OCI-LY7 (cell line): ENCODE measurements at regions of chr7 and their contacts with region 1.

Region 1: GRCh38 chr7:18495412-18496340 is at the start of gene HDAC9:
- DNase-seq: peak; percentile 92
- H3K4me3 ChIP-seq: peak within 1 kb of the TSS; percentile 85
- H3K27ac ChIP-seq: peak within 1 kb of the TSS; percentile 79
- H3K4me1 ChIP-seq: peaks cover 29% of the 10 kb centered on the region
- CTCF ChIP-seq: no peak
- total RNA-seq, gene HDAC9: 90.3 and 91.7 TPM in 2 replicates

Region 2: GRCh38 chr7:18352339-18353255 is 143.1 kb before region 1 on chr7:
- CTCF ChIA-PET with region 1: interaction called, 4 read pairs
- POLR2A ChIA-PET with region 1: interaction called, 4 read pairs
- intact Hi-C with region 1: loop called (anchors 5 kb)
- DNase-seq: peak; percentile 66
- H3K4me3 ChIP-seq: no peak overlapping the region
- H3K27ac ChIP-seq: no peak overlapping the region
- H3K4me1 ChIP-seq: peaks cover 9% of the 10 kb centered on the region
- CTCF ChIP-seq: peak; percentile 98

Region 3: GRCh38 chr7:18520450-18521235 is 25.0 kb after region 1 on chr7:
- CTCF ChIA-PET with region 1: interaction called, 4 read pairs
- POLR2A ChIA-PET with region 1: interaction called, 532 read pairs
- intact Hi-C with region 1: loop called (anchors 1 kb)
- DNase-seq: peak; percentile 87
- H3K4me3 ChIP-seq: peak overlapping the region; percentile 65
- H3K27ac ChIP-seq: peak overlapping the region; percentile 99
- H3K4me1 ChIP-seq: peaks cover 99% of the 10 kb centered on the region
- CTCF ChIP-seq: no peak

Region 4: GRCh38 chr7:18538554-18539250 is 43.0 kb after region 1 on chr7:
- CTCF ChIA-PET with region 1: no interaction called
- POLR2A ChIA-PET with region 1: interaction called, 23 read pairs
- intact Hi-C with region 1: loop called (anchors 5 kb)
- DNase-seq: no peak
- H3K4me3 ChIP-seq: no peak overlapping the region
- H3K27ac ChIP-seq: no peak overlapping the region
- H3K4me1 ChIP-seq: peaks cover 62% of the 10 kb centered on the region
- CTCF ChIP-seq: no peak

Region 5: GRCh38 chr7:18666107-18666728 is 170.5 kb after region 1 on chr7:
- CTCF ChIA-PET with region 1: interaction called, 4 read pairs
- POLR2A ChIA-PET with region 1: interaction called, 3 read pairs
- intact Hi-C with region 1: loop called (anchors 5 kb)
- DNase-seq: peak; percentile 85
- H3K4me3 ChIP-seq: no peak overlapping the region
- H3K27ac ChIP-seq: no peak overlapping the region
- H3K4me1 ChIP-seq: peaks cover 11% of the 10 kb centered on the region
- CTCF ChIP-seq: peak; percentile 100